ENCODE measurements at regions of chr9 and their contacts with region 1.

Region 1: GRCh38 chr9:125513668-125514413 is 193.2 kb downstream of the MAPKAP1 start:
- DNase-seq: no peak

Region 2: GRCh38 chr9:125472926-125473701 is 40.7 kb before region 1 on chr9:
- intact Hi-C with region 1: loop called (anchors 5 kb)
- DNase-seq: no peak

Region 3: DNA sequence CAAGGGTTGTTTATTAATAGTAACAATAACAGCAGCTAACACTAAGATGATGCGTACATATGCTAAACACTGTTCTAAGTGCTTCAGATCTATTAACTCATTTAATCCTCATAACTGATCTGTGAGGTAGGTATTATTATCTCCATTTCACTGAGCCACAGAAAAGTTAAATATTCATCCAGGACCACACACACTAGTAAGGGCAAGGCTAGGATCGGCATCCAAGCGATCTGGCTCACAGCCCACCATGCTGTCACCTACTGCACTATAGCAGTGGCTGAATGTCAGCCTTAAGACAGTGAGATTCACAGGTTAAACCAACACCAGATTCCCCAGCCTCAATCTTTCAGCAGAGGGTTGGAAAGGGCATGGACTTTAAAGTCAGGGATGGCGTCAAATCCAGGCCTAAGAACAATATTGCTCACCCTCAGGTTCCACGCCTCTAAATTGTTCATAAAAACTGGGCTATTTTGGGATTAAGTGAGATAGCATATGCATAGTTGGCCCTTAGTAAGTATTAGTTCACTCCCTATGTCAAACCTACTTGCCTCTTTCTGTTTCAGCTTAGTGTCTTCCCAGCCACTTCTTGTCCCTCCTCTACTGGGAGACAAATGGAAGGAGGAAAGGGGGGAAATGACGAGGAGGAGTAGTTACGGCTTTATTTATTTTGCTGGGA is 42.3 kb after region 1 on chr9:
- intact Hi-C with region 1: no loop called
- DNase-seq: no peak

Region 4: GRCh38 chr9:125586172-125586511 is 72.3 kb after region 1 on chr9:
- intact Hi-C with region 1: no loop called
- DNase-seq: no peak

Measured in cardiac septum (tissue), 1 donor.